Naive thymus-derived CD8-positive, alpha-beta T cell (primary cell): ENCODE measurements at regions of chr3 and their contacts with region 1.

Region 1: GRCh38 chr3:67739851-67740250 is 85.4 kb upstream of the SUCLG2 start:
- DNase-seq: no peak
- ATAC-seq: no peak
- H3K4me3 Mint-ChIP-seq: peak overlapping the region in 4 of 10 donors; percentile 0 to 49 (median 28)
- H3K27ac Mint-ChIP-seq: peak overlapping the region; percentile 76 to 98 (median 96)
- H3K4me1 Mint-ChIP-seq: peaks cover 42 to 78% (median 70%) of the 10 kb centered on the region in 4 donors
- H3K27me3 Mint-ChIP-seq: peaks cover 0 to 5% (median 0%) of the 10 kb centered on the region in 5 donors

Region 2: GRCh38 chr3:67578416-67578815 is 161.4 kb before region 1 on chr3:
- POLR2A ChIA-PET with region 1: no interaction called
- DNase-seq: no peak
- ATAC-seq: no peak
- H3K4me3 Mint-ChIP-seq: no peak overlapping the region
- H3K27ac Mint-ChIP-seq: peak overlapping the region in 3 of 10 donors; percentile 14 to 92 (median 34)
- H3K4me1 Mint-ChIP-seq: peaks cover 26 to 62% (median 43%) of the 10 kb centered on the region in 4 donors
- H3K27me3 Mint-ChIP-seq: no peaks in the 10 kb centered on the region

Region 3: GRCh38 chr3:67654099-67654843 is 85.6 kb before region 1 on chr3 and contains the start of gene SUCLG2:
- POLR2A ChIA-PET with region 1: interaction called, 105 read pairs
- DNase-seq: peak; percentile 66 to 88 (median 74)
- ATAC-seq: peak; percentile 72 to 75
- H3K4me3 Mint-ChIP-seq: peak within 1 kb of the TSS; percentile 79 to 92 (median 88)
- H3K27ac Mint-ChIP-seq: peak within 1 kb of the TSS; percentile 82 to 97 (median 95)
- H3K4me1 Mint-ChIP-seq: peaks cover 42 to 76% (median 70%) of the 10 kb centered on the region in 4 donors
- H3K27me3 Mint-ChIP-seq: no peaks in the 10 kb centered on the region
- polyA plus RNA-seq, gene SUCLG2: 79.7 to 93.8 (median 91.4) TPM

Region 4: DNA sequence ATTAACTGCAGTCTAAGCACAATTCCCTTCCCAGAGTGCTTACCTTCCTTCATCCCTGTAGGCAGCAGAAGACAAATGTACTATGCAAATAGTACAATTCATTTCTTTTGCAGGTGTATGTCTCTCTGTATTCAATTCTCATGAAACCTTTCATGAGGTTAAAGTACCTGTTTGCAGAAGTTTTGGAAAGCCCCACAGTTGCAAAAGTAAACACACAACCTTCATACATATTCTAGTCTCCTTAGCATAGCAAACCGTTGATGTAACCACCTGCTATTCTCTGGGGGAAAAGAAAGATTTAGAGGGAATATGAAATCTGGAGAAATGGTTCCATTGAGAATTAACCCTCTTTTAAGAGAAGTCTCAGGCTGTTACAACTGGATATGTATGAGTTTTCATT is 114.8 kb after region 1 on chr3:
- POLR2A ChIA-PET with region 1: no interaction called
- DNase-seq: no peak
- ATAC-seq: no peak
- H3K4me3 Mint-ChIP-seq: no peak overlapping the region
- H3K27ac Mint-ChIP-seq: no peak overlapping the region
- H3K4me1 Mint-ChIP-seq: peaks cover 2 to 8% (median 8%) of the 10 kb centered on the region in 4 donors
- H3K27me3 Mint-ChIP-seq: no peaks in the 10 kb centered on the region